A673 (cell line): ENCODE measurements at regions of chr14 and their contacts with region 1.

Region 1: DNA sequence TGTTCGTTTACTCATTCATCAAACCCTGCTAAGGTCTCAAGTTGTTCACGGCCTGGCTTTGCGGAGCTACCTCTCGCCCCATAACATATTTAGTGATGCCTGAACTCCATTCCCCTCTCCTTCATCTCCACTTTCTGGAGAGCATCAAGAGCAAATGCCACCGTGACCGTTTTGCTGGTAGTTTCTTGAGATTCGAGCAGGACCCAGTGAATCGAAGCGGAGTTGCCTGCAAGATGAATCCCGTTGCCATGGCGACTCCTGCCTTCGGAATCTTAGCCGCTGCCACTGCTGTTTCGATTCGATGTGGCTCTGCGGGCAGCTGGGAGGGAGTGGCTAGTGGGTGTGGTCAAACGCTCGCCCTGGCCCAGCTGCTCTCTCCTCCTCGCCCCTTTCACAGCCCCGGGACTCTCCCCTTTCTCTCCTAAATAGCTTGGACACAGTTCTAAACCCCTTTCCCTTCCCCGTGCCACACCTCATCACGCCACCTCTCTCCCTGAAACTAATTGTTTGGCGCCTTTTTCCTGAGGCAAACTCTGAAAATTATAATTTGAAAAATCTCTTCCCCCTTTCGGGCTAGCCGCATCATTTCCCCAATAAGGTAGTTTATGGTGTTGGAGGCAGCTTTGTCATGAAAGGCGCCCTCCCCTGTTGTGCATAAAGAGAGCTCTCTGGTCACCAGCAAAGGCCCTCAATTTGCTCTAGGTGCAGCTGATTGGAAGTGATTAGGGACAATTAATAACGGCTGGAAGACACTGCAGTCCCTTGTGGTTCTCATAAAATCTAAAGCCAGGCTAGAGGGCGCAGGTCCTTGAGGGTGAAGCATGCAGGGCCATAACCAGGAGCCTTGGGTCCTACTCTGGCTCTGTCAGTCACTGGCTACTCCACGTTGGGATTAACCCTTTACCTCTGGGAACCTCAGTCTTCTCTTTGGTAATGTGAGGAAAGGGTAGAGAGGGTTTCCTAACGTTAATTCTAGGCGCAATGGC is 1.6 kb downstream of the DAAM1 start:
- DNase-seq: peak; percentile 85
- H3K4me3 ChIP-seq: peak overlapping the region; percentile 87
- H3K27ac ChIP-seq: no peak overlapping the region
- H3K4me1 ChIP-seq: no peaks in the 10 kb centered on the region
- H3K27me3 ChIP-seq: peaks cover 19% of the 10 kb centered on the region
- CTCF ChIP-seq: no peak

Region 2: DNA sequence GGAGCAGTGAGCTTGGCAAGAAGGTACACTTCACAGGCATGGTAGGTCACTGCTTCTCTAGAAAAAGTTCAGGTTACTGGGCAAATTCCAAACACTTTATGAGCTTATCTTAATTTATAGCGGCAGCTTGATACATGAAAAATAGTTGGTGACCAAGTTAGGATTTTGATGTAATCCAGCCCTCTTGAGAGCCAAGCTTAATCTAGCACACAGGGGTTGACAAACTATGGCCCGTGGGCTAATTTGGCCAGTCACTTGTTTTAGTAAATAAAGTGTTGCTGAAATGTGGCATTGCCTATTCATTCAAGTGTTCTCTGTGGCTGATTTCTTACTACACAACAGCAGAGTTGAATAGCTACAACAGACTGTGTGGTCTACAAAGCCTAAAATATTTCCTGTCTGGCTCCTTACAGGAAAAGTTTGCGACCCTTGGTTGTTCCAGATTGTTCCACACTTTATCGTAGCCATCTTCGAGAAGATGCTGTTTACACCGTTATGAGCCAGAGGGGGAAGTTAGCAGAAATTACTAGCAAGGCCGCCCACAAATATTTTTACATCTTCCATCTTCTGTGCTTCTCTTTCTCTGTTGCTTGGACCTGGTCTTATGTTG is 119.3 kb after region 1 on chr14:
- CTCF ChIA-PET with region 1: interaction called, 13 read pairs
- POLR2A ChIA-PET with region 1: no interaction called
- intact Hi-C with region 1: no loop called
- DNase-seq: no peak
- H3K4me3 ChIP-seq: no peak overlapping the region
- H3K27ac ChIP-seq: no peak overlapping the region
- H3K4me1 ChIP-seq: no peaks in the 10 kb centered on the region
- H3K27me3 ChIP-seq: no peaks in the 10 kb centered on the region
- CTCF ChIP-seq: no peak

Region 3: GRCh38 chr14:59374048-59374447 is 184.0 kb after region 1 on chr14:
- CTCF ChIA-PET with region 1: no interaction called
- POLR2A ChIA-PET with region 1: interaction called, 12 read pairs
- intact Hi-C with region 1: no loop called
- DNase-seq: no peak
- H3K4me3 ChIP-seq: no peak overlapping the region
- H3K27ac ChIP-seq: no peak overlapping the region
- H3K4me1 ChIP-seq: no peaks in the 10 kb centered on the region
- H3K27me3 ChIP-seq: no peaks in the 10 kb centered on the region
- CTCF ChIP-seq: no peak